Posterior vena cava (tissue), 2 donors: ENCODE measurements at regions of chr2 and their contacts with region 1.

Region 1: DNA sequence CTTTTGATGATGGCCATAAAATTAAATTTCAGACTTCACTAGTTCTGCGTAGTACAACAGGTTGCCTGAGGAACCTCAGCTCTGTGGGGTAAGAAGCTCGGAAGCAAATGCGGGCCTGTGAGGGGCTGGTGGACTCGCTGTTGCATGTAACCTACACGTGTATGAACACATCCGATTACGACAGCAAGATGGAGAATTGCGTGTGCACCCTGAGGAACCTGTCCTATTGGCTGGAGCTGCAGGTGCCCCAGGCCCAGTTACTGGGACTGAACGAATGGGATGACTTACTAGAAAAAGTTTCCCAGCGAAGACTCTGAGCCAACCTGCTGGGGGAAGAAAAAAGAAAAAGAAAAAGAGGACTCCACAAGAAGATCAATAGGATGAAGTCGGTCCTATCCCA is 244.2 kb upstream of the MAP2 start:
- DNase-seq: no peak

Region 2: DNA sequence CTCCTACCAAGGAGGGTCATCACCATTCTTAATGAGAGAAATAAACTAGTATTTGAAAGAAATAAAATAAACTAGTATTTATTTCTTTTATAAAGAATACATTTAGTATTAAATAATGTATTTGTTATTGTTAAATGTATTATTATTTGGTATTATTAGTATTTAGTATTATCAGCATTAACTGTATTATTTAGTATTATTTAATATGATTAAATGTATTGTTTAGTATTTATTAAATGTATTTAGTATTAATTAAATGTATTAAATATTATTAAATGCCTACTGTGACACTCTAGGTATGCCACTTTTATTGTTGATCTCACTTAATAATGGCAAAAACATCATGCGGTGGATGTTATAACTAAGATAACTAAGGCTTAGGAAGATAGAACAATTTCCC is 109.4 kb before region 1 on chr2:
- intact Hi-C with region 1: no loop called
- DNase-seq: no peak

Region 3: DNA sequence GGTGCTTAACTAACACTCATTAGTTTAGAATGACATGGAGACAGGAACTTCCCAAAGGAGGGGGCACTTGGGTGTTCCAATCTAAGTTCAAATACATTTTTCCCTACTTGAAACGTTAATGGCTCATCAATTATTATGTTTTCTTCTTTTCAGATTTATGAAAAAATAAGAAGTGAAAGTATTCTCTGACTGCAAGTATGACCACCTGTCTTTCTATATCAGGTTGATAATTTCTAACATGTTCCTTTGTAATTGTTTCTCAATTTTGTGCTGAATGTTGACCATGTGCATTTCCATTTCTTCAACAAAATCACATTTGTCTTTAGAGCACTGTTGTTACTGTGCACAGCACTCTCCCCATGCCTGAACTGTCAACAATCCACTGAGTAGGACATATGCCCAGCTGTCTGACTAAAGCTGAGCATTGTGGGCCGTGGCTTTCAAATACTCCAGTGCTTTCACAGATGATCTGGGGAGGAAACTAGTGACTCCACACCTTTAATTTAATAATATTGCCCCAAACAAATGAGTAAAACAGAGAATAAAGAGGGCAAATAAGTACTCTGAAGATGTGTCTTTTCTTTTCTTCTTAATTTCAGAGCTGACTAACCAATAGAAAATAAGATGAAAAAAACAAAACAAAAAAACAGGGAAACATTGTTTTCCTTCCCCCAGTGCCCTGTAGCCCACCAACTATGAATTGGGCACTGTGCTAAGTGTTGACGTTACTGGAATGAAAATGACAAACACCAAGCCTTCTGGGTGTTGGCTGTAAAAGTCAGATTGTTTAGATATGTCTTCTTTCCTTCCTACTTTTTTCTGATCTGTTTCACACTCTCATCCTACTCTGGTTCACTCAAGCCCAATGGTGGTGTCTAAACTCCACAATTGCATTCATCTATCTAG is 1280.9 kb after region 1 on chr2:
- intact Hi-C with region 1: loop called in 1 of 2 experiments (anchors 5 kb)
- DNase-seq: no peak